Activated CD4-positive, alpha-beta memory T cell treated with anti-CD3 and anti-CD28 coated beads for 36 hours (primary cell): ENCODE measurements at regions of chr11 and their contacts with region 1.

Region 1: DNA sequence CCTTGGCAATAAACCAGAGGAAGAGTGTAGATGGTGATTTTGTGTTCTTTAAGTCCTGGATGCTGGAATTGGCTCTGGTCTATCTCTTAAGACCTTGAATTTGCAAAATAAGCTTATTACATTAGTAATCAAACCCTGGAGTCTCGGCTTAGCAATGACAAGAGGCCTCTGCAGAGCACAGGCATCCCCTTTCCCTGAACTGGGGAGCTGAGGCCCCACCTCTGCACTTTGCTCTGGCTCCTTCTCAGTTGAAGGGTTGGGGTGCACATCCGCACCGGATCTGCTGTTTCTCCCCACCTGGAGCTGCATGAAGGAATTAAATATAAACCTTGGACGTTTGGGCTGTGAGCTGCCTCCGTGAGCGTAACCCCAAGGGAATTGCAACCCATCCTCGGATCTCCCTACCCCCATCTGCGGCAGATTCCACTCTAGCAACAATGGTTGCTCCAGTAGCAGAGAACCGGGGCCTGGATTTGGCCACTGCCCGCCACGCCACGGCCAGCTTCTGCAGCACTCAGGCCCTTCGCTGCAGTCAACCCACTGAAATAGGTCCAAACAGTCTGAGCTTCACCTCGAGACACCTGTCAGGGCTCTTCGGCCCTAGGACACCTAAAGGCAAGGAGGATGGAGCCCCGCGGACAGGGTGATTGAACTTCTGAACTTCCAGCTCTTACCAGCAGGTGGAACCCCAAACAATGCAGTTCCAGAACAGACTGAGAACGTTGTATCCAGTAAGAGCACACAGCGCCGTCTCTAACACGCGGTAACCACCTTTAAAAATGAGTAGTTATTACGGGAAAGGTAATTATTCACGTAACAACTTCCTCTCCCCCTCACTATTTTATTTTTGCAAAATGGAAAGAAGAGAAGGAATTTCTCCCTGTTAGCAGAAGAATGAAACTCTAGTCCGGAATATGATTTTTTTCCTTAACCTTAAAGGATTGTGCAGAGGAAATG is 54.8 kb upstream of the CAPRIN1 start:
- DNase-seq: peak; percentile 81
- H3K4me3 Mint-ChIP-seq: no peak overlapping the region
- H3K27ac Mint-ChIP-seq: no peak overlapping the region
- H3K4me1 Mint-ChIP-seq: peaks cover 11% of the 10 kb centered on the region
- H3K27me3 Mint-ChIP-seq: peaks cover 16% of the 10 kb centered on the region

Region 2: GRCh38 chr11:34006876-34007275 is 10.1 kb after region 1 on chr11:
- CTCF ChIA-PET with region 1: interaction called, 19 read pairs
- POLR2A ChIA-PET with region 1: no interaction called
- intact Hi-C with region 1: no loop called
- DNase-seq: no peak
- H3K4me3 Mint-ChIP-seq: no peak overlapping the region
- H3K27ac Mint-ChIP-seq: no peak overlapping the region
- H3K4me1 Mint-ChIP-seq: no peaks in the 10 kb centered on the region
- H3K27me3 Mint-ChIP-seq: peaks cover 11% of the 10 kb centered on the region

Region 3: GRCh38 chr11:34051349-34052035 is 54.7 kb after region 1 on chr11 and contains the start of gene CAPRIN1:
- CTCF ChIA-PET with region 1: interaction called, 9 read pairs
- POLR2A ChIA-PET with region 1: interaction called, 7 read pairs
- intact Hi-C with region 1: loop called (anchors 2 kb)
- DNase-seq: peak; percentile 88
- H3K4me3 Mint-ChIP-seq: peak within 1 kb of the TSS; percentile 92
- H3K27ac Mint-ChIP-seq: peak within 1 kb of the TSS; percentile 96
- H3K4me1 Mint-ChIP-seq: peaks cover 18% of the 10 kb centered on the region
- H3K27me3 Mint-ChIP-seq: no peaks in the 10 kb centered on the region
- total RNA-seq, gene CAPRIN1: 261 to 264 TPM

Region 4: GRCh38 chr11:34068111-34068510 is 71.3 kb after region 1 on chr11:
- CTCF ChIA-PET with region 1: interaction called, 4 read pairs
- POLR2A ChIA-PET with region 1: no interaction called
- intact Hi-C with region 1: loop called (anchors 5 kb)
- DNase-seq: no peak
- H3K4me3 Mint-ChIP-seq: no peak overlapping the region
- H3K27ac Mint-ChIP-seq: no peak overlapping the region
- H3K4me1 Mint-ChIP-seq: peaks cover 54% of the 10 kb centered on the region
- H3K27me3 Mint-ChIP-seq: no peaks in the 10 kb centered on the region

Region 5: GRCh38 chr11:34105079-34105956 is 108.5 kb after region 1 on chr11 and contains the start of gene NAT10:
- CTCF ChIA-PET with region 1: interaction called, 12 read pairs
- POLR2A ChIA-PET with region 1: interaction called, 3 read pairs
- intact Hi-C with region 1: loop called (anchors 1 kb)
- DNase-seq: peak; percentile 98
- H3K4me3 Mint-ChIP-seq: peak within 1 kb of the TSS; percentile 95
- H3K27ac Mint-ChIP-seq: peak within 1 kb of the TSS; percentile 98
- H3K4me1 Mint-ChIP-seq: peaks cover 45% of the 10 kb centered on the region
- H3K27me3 Mint-ChIP-seq: peaks cover 4% of the 10 kb centered on the region
- total RNA-seq, gene NAT10: 84.7 to 87.6 TPM

Region 6: GRCh38 chr11:34492806-34493414 is 496.1 kb after region 1 on chr11:
- CTCF ChIA-PET with region 1: interaction called, 6 read pairs
- POLR2A ChIA-PET with region 1: no interaction called
- intact Hi-C with region 1: loop called (anchors 1 kb)
- DNase-seq: peak; percentile 51
- H3K4me3 Mint-ChIP-seq: no peak overlapping the region
- H3K27ac Mint-ChIP-seq: no peak overlapping the region
- H3K4me1 Mint-ChIP-seq: no peaks in the 10 kb centered on the region
- H3K27me3 Mint-ChIP-seq: peaks cover 3% of the 10 kb centered on the region